Activated CD4-positive, alpha-beta T cell treated with anti-CD3 and anti-CD28 coated beads for 36 hours (primary cell): ENCODE measurements at regions of chr5 and their contacts with region 1.

Region 1: GRCh38 chr5:151751593-151751992 is 6.8 kb downstream of the ATOX1 start:
- DNase-seq: no peak
- ATAC-seq: no peak
- H3K4me3 Mint-ChIP-seq: no peak overlapping the region
- H3K27ac Mint-ChIP-seq: no peak overlapping the region
- H3K4me1 Mint-ChIP-seq: peaks cover 37% of the 10 kb centered on the region
- H3K27me3 Mint-ChIP-seq: no peaks in the 10 kb centered on the region

Region 2: GRCh38 chr5:151740336-151740942 is 11.2 kb before region 1 on chr5:
- CTCF ChIA-PET with region 1: interaction called, 15 read pairs
- POLR2A ChIA-PET with region 1: no interaction called
- intact Hi-C with region 1: no loop called
- DNase-seq: peak; percentile 65
- ATAC-seq: peak; percentile 72
- H3K4me3 Mint-ChIP-seq: no peak overlapping the region
- H3K27ac Mint-ChIP-seq: no peak overlapping the region
- H3K4me1 Mint-ChIP-seq: peaks cover 14% of the 10 kb centered on the region
- H3K27me3 Mint-ChIP-seq: no peaks in the 10 kb centered on the region

Region 3: DNA sequence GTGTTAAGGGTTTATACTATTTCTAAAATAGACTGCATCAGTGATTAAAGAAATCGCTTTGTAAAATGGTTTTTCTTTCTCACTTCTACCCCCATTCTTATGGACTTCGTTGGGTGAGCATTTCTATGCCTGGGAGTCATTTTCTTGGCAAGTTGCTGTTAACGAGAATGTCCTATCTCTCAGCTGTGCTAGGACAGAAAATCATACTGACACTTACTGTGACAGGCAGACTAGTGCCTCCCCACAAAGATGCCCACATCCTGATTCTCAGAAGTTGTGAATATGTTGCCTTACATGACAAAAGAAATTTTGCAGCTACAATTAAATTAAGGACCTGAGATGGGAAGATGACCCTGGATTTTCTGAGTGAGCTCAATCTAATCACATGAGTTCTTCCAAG is 718.6 kb after region 1 on chr5:
- CTCF ChIA-PET with region 1: no interaction called
- POLR2A ChIA-PET with region 1: no interaction called
- intact Hi-C with region 1: no loop called
- DNase-seq: no peak
- ATAC-seq: no peak
- H3K4me3 Mint-ChIP-seq: no peak overlapping the region
- H3K27ac Mint-ChIP-seq: no peak overlapping the region
- H3K4me1 Mint-ChIP-seq: no peaks in the 10 kb centered on the region
- H3K27me3 Mint-ChIP-seq: peaks cover 7% of the 10 kb centered on the region